MCF 10A (cell line): ENCODE measurements at regions of chr18 and their contacts with region 1.

Region 1: DNA sequence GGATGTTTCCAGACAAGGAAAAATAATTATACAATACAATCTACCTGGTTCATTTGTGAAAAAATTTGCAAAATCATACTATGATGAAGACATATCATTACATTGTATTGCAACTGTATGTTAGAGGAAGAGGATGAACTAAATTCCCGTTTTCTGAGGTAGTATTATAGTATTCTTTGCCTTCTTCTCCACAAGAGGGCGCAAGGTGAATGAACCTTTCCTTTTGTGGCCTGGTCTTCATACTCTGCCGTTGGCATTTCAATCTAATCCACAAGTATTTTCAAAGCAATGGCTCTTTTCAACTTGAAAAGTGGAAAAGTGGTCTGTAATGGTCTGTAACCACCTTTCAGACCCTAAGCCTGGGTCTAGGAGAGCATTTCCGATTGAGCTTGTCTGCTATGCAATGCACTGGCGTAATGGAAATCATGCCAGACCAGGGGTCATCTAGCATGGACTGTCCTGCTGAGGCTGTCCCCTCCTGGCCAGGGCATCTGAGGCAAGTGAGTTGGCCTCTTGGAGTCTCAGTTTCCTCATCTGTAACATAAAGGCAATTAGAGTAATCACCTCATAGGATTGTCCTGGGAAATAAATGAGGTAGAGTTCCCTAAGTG is 30.8 kb upstream of the ZNF396 start:
- DNase-seq: peak; percentile 88
- H3K4me3 Mint-ChIP-seq: no peak overlapping the region
- H3K27ac Mint-ChIP-seq: no peak overlapping the region
- H3K4me1 Mint-ChIP-seq: peaks cover 35% of the 10 kb centered on the region
- H3K27me3 Mint-ChIP-seq: no peaks in the 10 kb centered on the region
- CTCF ChIP-seq: peak; percentile 67

Region 2: GRCh38 chr18:35386600-35387351 is 21.2 kb before region 1 on chr18:
- CTCF ChIA-PET with region 1: interaction called, 12 read pairs
- POLR2A ChIA-PET with region 1: no interaction called
- intact Hi-C with region 1: no loop called
- DNase-seq: peak; percentile 84
- H3K4me3 Mint-ChIP-seq: no peak overlapping the region
- H3K27ac Mint-ChIP-seq: no peak overlapping the region
- H3K4me1 Mint-ChIP-seq: peaks cover 9% of the 10 kb centered on the region
- H3K27me3 Mint-ChIP-seq: no peaks in the 10 kb centered on the region
- CTCF ChIP-seq: peak; percentile 86

Region 3: DNA sequence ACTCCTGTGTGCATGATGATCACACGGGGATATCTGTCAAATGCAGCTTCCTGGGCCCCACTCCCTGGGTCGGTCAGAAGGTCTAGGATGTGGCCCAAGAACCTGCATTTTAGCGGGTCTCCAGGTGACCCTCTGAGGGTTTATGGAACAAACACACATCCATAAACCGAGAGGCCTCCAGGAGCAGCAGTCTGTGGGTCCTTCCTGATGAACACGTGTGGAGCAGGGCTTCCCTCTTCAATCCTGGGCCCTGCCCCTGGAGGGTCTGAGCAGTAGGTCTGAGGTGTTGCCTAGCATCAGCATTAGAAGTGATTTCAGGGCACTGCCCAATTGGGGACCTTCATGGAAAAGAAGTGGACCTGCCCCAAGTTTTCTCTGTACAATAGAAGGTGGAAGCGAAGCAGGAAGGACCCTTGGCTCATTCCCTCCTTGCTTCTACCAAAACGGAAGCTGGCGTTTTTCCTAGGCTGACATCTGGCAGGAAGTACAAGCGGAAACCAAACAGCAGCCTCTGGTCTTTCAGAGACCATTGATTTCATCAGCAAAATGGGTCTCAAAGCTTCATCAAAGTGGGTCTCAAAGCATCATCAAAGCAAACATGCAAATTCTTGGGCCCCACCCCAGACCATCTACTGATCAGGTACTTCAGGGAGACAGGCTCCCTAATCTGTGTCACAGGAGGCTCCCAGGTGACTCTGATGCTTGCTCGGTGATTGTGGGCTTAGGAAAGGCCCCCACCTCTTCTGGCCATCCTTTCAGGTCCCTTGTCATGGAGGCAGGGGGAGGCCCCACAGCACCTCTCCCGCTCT is 59.0 kb after region 1 on chr18:
- CTCF ChIA-PET with region 1: no interaction called
- POLR2A ChIA-PET with region 1: no interaction called
- intact Hi-C with region 1: no loop called
- DNase-seq: no peak
- H3K4me3 Mint-ChIP-seq: no peak overlapping the region
- H3K27ac Mint-ChIP-seq: no peak overlapping the region
- H3K4me1 Mint-ChIP-seq: peaks cover 34% of the 10 kb centered on the region
- H3K27me3 Mint-ChIP-seq: no peaks in the 10 kb centered on the region
- CTCF ChIP-seq: no peak

Region 4: DNA sequence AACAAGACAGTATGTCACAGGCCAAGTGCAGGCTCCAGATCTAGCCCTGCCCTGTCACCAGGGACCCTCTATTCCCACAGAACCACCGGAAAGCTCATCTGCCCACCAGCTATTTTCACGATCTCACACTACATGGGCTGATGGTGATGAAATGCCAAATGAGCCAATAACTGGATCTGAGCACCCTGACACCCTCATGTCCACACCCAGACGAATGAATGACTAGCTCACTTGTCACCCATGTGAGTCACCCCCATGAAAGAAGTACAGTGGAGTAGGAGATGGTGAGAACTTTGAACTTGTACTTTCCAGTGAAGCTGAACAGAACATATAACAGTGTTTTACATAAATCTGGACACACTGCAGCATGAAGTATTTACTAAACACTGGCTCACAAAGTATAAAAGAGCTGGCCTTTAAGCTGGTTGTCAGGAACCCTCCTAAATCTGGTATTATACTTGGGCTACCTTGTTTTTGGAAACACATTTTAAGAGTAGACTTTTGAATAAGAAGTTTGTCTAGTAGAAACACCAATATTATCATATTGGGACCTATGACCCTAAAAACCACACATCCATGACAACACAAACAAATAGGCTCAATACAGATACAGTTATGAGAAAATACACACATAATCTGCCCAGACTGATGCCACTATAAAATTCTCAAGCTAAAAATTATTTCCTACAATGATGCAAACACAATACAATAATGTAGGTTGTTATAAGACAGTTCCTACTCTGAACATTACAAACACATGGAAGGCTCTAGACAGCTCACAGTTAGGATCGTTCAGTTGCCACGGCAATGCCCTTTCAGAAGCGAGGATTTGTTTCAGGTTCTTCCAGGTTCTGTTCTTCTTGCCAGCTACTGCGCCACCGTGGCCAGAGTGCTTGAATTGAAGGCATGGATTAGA is 70.8 kb after region 1 on chr18:
- CTCF ChIA-PET with region 1: interaction called, 8 read pairs
- POLR2A ChIA-PET with region 1: interaction called, 18 read pairs
- intact Hi-C with region 1: loop called (anchors 5 kb)
- DNase-seq: peak; percentile 97
- H3K4me3 Mint-ChIP-seq: peak overlapping the region; percentile 61
- H3K27ac Mint-ChIP-seq: peak overlapping the region; percentile 86
- H3K4me1 Mint-ChIP-seq: peaks cover 45% of the 10 kb centered on the region
- H3K27me3 Mint-ChIP-seq: no peaks in the 10 kb centered on the region
- CTCF ChIP-seq: no peak

Region 5: DNA sequence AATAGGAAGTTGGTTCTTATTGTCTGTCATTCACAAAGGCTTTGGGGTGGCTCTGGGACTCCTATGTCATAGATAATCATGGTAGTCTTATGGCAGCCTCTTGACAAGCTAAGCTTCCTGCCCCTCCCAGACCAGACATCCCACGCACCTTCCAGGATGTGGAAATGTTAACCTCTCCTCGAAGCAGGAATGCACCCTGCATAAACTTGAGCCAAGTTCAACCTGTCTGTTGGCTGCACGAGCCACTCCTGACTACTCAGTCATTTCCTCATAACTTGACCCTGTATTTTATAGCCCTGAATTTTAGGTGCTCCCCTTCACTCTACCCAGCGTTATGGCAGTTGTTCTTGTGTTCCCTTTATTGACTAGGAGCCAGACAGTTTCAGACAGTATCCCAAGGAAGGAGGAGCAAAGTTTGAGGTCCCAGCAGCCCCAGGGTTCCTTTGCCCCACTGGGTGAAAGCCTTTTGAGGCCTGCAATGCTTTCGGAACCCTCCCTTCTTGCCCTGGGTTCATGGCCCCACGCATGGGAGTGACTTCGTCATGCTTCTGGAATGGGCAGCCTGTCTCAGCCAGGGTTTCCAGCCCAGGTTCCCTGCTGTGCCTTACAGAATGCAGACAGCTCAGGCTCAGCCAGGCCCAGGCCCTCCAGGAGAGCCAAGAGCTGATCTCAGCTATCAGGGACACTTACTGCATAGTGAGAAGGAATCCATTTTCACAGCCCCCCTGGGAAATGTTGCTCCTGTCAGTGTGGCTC is 105.4 kb after region 1 on chr18:
- CTCF ChIA-PET with region 1: interaction called, 12 read pairs
- POLR2A ChIA-PET with region 1: no interaction called
- intact Hi-C with region 1: loop called (anchors 5 kb)
- DNase-seq: peak; percentile 86
- H3K4me3 Mint-ChIP-seq: peak overlapping the region; percentile 22
- H3K27ac Mint-ChIP-seq: peak overlapping the region; percentile 89
- H3K4me1 Mint-ChIP-seq: peaks cover 39% of the 10 kb centered on the region
- H3K27me3 Mint-ChIP-seq: no peaks in the 10 kb centered on the region
- CTCF ChIP-seq: no peak

Region 6: GRCh38 chr18:35535297-35535696 is 127.3 kb after region 1 on chr18:
- CTCF ChIA-PET with region 1: no interaction called
- POLR2A ChIA-PET with region 1: no interaction called
- intact Hi-C with region 1: no loop called
- DNase-seq: no peak
- H3K4me3 Mint-ChIP-seq: no peak overlapping the region
- H3K27ac Mint-ChIP-seq: no peak overlapping the region
- H3K4me1 Mint-ChIP-seq: no peaks in the 10 kb centered on the region
- H3K27me3 Mint-ChIP-seq: no peaks in the 10 kb centered on the region
- CTCF ChIP-seq: no peak

Region 7: GRCh38 chr18:35616664-35617423 is 208.9 kb after region 1 on chr18:
- CTCF ChIA-PET with region 1: interaction called, 3 read pairs
- POLR2A ChIA-PET with region 1: interaction called, 6 read pairs
- intact Hi-C with region 1: loop called (anchors 2 kb)
- DNase-seq: peak; percentile 89
- H3K4me3 Mint-ChIP-seq: no peak overlapping the region
- H3K27ac Mint-ChIP-seq: no peak overlapping the region
- H3K4me1 Mint-ChIP-seq: peaks cover 24% of the 10 kb centered on the region
- H3K27me3 Mint-ChIP-seq: no peaks in the 10 kb centered on the region
- CTCF ChIP-seq: no peak

Region 8: DNA sequence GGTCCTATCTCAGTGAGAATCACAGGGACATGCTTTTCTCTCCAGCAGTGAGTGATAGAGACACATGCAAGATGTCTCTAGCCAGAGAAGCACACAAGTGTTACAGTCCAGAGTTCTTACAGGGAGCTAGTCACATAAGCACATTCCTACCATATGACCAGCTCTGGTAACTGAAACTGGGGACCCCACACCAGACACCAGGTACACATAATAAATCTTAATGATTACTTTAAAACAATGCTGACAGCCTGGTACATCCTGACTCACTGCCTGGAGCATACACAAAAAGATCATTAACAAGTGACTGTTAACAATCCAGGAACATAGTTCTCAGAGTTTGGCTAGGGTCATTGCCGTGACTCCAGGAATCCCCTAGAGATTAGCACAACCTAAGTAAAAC is 227.2 kb after region 1 on chr18:
- CTCF ChIA-PET with region 1: no interaction called
- POLR2A ChIA-PET with region 1: no interaction called
- intact Hi-C with region 1: no loop called
- DNase-seq: no peak
- H3K4me3 Mint-ChIP-seq: no peak overlapping the region
- H3K27ac Mint-ChIP-seq: no peak overlapping the region
- H3K4me1 Mint-ChIP-seq: no peaks in the 10 kb centered on the region
- H3K27me3 Mint-ChIP-seq: no peaks in the 10 kb centered on the region
- CTCF ChIP-seq: no peak

Region 9: DNA sequence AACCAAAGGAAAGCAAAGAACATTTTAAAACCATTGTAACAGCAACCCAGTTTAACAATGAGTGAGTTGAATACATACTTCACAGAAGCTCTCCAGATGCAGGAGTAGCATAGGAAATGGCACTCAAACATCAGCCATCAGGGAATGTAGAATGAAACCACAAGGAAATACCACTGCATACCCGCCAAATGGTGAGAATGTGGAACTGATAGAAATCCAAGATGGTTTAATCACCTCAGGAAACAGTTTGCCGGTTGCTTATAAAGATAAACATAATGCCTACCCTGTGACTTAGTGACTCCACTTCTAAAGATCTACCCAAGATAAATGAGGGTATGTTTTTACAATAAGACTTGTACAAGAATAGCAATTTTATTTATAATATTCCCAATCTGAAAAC is 305.6 kb after region 1 on chr18:
- CTCF ChIA-PET with region 1: interaction called, 4 read pairs
- POLR2A ChIA-PET with region 1: no interaction called
- intact Hi-C with region 1: loop called (anchors 10 kb)
- DNase-seq: no peak
- H3K4me3 Mint-ChIP-seq: no peak overlapping the region
- H3K27ac Mint-ChIP-seq: no peak overlapping the region
- H3K4me1 Mint-ChIP-seq: no peaks in the 10 kb centered on the region
- H3K27me3 Mint-ChIP-seq: no peaks in the 10 kb centered on the region
- CTCF ChIP-seq: no peak

Region 10: DNA sequence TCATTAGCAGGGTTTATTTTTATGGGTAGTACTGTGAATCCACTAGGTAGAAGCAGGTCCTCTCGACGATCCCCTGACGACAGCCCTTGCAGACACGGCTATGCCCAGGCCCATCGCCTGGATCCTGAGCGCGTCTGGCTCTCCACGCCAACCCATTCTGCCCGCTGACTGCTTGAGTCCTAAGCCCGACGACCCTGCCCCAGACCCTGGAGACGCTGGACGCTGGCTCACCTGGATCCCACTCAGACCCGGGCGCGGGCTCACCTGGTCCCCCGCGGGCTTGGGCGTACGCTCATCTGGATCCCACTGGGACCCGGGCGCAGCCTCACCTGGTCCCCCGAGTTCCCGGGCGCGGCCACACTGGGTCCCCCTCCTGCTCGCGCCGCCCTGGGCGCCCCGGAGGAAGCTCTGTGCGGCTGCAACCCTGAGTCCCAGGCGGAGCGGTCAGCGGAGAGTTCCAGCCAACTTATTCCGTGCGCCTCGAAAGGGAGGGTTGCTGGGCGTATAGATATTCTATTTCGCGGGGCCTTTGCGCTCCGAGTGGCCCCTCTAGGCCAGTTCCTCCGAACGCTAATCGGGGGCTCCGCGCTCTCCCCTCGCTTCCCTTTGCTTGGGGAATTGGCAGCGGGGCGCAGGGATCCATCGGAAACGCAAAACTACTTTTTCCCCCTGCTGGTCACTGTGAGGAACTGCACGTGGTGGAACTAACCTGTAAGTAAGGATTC is 542.1 kb after region 1 on chr18:
- CTCF ChIA-PET with region 1: interaction called, 3 read pairs
- POLR2A ChIA-PET with region 1: no interaction called
- intact Hi-C with region 1: loop called (anchors 5 kb)
- DNase-seq: peak; percentile 66
- H3K4me3 Mint-ChIP-seq: peak overlapping the region; percentile 81
- H3K27ac Mint-ChIP-seq: peak overlapping the region; percentile 35
- H3K4me1 Mint-ChIP-seq: peaks cover 10% of the 10 kb centered on the region
- H3K27me3 Mint-ChIP-seq: peaks cover 10% of the 10 kb centered on the region
- CTCF ChIP-seq: peak; percentile 85